ENCODE measurements at regions of chr7 and their contacts with region 1.

Region 1: DNA sequence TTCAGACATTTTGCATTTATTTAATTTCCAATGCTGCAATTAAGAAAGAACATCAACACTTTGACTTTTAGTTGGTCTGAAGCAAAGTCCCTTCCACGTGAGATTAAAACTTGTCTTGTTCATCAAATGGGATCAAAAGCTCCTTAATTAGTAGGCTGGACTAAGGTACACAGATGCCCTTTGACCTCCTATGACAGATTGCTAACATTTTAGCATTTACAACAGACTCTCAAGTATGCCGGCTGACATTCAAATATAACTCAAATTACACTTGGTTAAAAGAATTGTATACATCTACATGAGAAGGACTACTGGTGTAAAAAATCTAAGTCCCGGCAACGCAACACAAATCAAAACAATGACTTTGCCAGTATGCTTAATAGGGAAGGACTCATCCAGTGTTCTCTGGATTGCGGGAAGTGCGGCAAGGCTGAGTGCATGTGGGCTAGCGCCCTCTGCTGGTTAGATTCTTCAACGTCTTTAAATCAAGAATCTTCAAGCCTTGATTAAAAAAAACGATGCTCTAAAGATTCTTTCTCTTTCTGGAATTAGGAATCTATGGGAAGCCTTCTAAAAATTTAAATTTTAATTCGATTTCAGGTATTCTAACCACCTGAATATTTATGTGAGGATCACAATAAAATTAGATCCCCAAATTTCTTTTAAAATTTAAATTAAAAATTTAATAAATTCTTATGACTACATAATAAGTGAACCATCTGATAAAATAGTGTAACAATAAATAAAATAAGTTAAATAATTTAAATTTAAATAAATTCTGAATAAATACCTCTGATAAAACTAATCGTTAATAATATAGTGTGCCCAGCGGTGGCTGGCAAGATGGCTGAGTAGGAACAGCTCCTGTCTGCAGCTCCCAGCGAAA is 444.7 kb downstream of the DGKB start:
- ATAC-seq: peak; percentile 65 to 92 (median 70)
- H3K4me3 ChIP-seq: no peak overlapping the region
- H3K27ac ChIP-seq: no peak overlapping the region
- H3K4me1 ChIP-seq: no peaks in the 10 kb centered on the region

Region 2: GRCh38 chr7:13770305-13770704 is 687.5 kb before region 1 on chr7:
- in situ Hi-C with region 1: loop called in 1 of 9 experiments (anchors 25 kb)
- ATAC-seq: no peak
- H3K4me3 ChIP-seq: no peak overlapping the region
- H3K27ac ChIP-seq: no peak overlapping the region
- H3K4me1 ChIP-seq: no peaks in the 10 kb centered on the region

Region 3: DNA sequence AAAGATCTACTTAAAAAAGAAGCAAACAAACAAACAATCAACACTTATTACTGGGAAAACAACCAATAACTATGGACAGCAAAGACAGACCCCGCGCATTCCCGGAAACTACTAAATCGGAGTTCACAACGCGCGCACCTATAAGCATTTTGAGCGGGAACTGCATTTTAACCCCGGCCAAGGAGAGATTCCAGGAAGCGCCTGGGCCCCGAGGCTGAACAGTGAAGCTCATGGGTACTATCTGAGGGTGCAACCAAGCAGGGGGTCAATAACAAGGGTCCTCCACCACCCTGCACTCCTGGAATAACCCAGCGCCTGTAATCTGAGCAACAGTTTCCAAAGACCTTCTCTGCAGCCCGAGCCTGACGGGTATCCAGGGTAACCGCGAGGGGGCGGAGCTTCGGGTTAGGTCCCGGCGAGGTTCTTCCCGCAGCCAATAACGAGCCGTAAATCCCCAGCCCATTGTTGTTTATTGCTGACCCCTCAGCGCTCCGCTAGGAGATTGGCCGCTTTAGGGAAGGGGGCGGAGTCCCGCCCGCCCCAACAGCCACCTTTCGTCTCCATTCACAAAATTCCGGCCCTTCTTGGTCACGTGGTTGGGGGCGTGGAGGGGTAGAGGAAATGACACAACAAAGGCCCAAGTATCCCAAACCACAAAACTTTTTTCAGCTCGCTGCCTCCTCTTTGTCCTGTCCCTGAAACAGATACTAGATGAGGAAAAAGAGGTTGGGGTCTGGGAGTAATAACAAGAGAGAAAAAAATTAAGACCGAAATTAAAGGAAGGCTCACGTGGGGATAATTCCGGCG is 466.6 kb before region 1 on chr7:
- in situ Hi-C with region 1: loop called in 1 of 9 experiments (anchors 25 kb)
- ATAC-seq: peak; percentile 84 to 92 (median 90)
- H3K4me3 ChIP-seq: peak overlapping the region; percentile 45 to 50 (median 46)
- H3K27ac ChIP-seq: peak overlapping the region in 1 of 2 donors; percentile 29
- H3K4me1 ChIP-seq: peaks cover 6 to 7% of the 10 kb centered on the region in 2 donors

Region 4: GRCh38 chr7:14748461-14748860 is 290.6 kb after region 1 on chr7:
- in situ Hi-C with region 1: no loop called
- ATAC-seq: peak in 7 of 8 experiments; percentile 45 to 97 (median 59)
- H3K4me3 ChIP-seq: no peak overlapping the region
- H3K27ac ChIP-seq: no peak overlapping the region
- H3K4me1 ChIP-seq: no peaks in the 10 kb centered on the region